Calu3 (cell line): ENCODE measurements at regions of chr4 and their contacts with region 1.

Region 1: DNA sequence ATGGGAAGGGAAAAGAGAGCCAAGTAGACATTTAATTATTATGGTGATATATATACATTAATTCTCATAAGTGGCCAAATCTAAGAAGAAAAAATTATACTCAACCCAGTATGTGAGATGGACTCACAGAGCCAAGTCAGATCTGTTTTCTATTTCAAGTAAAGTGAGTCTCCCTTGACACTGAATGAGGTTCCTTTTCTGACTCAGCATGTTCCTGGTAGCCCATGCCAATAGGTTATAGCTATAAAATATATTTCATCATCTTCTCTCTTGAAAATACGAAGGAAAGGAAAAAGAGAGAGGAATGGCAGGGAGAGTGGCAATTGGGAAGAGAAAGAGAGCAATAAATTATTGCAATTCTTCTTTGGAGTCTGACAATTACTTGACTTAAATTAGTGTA is 68.8 kb upstream of the GRIA2 start:
- DNase-seq: no peak
- H3K4me3 Mint-ChIP-seq: no peak overlapping the region
- H3K27ac Mint-ChIP-seq: no peak overlapping the region
- H3K4me1 Mint-ChIP-seq: no peaks in the 10 kb centered on the region
- H3K27me3 Mint-ChIP-seq: no peaks in the 10 kb centered on the region
- CTCF ChIP-seq: no peak

Region 2: DNA sequence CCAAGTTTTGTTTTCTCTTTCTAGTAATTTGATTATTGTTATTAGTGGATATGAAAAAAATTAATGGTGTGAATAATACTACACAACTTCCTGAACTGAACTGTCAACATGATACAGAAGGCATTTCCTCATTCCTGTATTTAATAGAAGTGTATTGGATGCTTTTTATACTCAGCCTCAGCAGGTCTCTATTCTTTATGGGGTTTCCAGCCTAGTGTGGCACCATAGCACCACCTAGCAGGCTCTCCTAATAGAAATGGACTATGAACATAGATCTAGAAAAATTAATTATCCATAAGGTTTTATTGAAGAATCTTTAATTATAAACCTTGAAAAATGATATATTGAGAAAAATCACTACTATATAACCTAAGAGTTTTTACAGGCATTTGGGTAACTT is 23.3 kb before region 1 on chr4:
- CTCF ChIA-PET with region 1: no interaction called
- intact Hi-C with region 1: loop called (anchors 1 kb)
- DNase-seq: peak; percentile 31
- H3K4me3 Mint-ChIP-seq: no peak overlapping the region
- H3K27ac Mint-ChIP-seq: no peak overlapping the region
- H3K4me1 Mint-ChIP-seq: no peaks in the 10 kb centered on the region
- H3K27me3 Mint-ChIP-seq: no peaks in the 10 kb centered on the region
- CTCF ChIP-seq: no peak